GM12878 (cell line): ENCODE measurements at regions of chr13 and their contacts with region 1.

Region 1: GRCh38 chr13:38872693-38873092 is 117.9 kb downstream of the STOML3 start:
- DNase-seq: no peak
- ATAC-seq: peak; percentile 87
- H3K4me3 ChIP-seq: no peak overlapping the region
- H3K27ac ChIP-seq: no peak overlapping the region
- H3K4me1 ChIP-seq: no peaks in the 10 kb centered on the region
- H3K27me3 ChIP-seq: 0 out of 4 replicates have a peak, but pooled peaks cover 0 to 3% of the 10 kb centered on the region in 2 experiments
- CTCF ChIP-seq: peak; percentile 61 to 73 (median 65)
- EP300 ChIP-seq: no peak
- POLR2A ChIP-seq: no peak
- RAD21 ChIP-seq: peak; percentile 82

Region 2: DNA sequence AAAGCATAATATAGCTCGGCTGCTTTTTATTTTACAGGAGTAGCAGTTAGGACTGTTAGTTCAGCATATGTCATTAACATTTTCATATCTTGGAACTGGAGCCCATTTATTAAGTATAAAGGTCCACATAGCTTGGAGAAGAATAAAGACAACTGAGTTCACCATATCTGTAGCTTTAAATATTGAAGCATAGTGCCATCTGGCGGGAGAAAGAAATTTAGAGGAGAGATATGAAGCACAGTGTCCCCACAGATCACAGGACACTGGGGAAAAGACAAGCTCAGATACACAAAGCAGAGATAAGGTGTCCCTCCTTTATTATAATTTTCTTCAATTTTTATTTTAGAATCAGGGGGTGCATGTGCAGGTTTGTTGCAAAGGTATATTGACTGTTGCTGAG is 290.6 kb before region 1 on chr13:
- CTCF ChIA-PET with region 1: interaction called, 3 read pairs
- POLR2A ChIA-PET with region 1: no interaction called
- RAD21 ChIA-PET with region 1: interaction called, 3 read pairs
- SMC1A ChIA-PET with region 1: interaction called, 9 read pairs
- in situ Hi-C with region 1: no loop called
- intact Hi-C with region 1: loop called (anchors 5 kb)
- DNase-seq: no peak
- ATAC-seq: peak; percentile 85
- H3K4me3 ChIP-seq: no peak overlapping the region
- H3K27ac ChIP-seq: no peak overlapping the region
- H3K4me1 ChIP-seq: no peaks in the 10 kb centered on the region
- H3K27me3 ChIP-seq: no peaks in the 10 kb centered on the region
- CTCF ChIP-seq: peak; percentile 17 to 53 (median 29); a peak in 4 of 6 replicates
- EP300 ChIP-seq: no peak
- POLR2A ChIP-seq: no peak
- RAD21 ChIP-seq: peak; percentile 66

Region 3: DNA sequence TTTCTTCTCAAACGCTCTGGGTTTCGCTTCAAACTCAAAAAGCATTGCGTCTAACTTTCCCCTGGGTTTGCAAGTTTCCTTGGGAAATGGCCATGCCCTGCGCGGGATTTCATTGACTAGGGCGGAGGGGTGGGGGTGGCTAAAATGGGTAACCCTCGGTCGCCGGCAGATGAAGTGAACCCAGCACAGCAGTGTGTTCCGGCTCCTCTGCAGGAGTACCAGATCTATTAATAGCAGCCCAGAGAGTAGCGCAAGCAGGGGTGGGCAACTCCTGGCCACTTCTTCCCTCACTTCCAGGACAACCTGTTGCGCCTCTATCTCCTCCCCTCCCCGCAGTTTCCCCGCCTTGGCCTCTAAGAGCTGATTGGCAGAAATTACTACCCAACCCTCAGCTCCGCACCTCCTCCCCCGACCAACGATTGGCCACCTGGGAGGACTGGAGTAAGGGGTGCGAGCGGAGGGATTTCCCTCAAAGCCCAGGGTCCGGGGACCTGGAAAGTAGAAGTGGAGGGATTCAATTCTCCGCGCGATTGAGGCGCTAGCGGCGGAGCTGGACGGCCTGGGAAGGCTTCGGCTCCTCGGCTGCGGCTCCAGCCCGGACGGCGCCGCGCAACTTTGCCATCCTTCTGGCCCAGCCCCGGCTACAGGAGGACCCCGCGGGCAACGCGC is 186.0 kb before region 1 on chr13 and contains the start of gene FREM2:
- CTCF ChIA-PET with region 1: interaction called, 58 read pairs
- POLR2A ChIA-PET with region 1: interaction called, 3 read pairs
- RAD21 ChIA-PET with region 1: interaction called, 26 read pairs
- SMC1A ChIA-PET with region 1: interaction called, 68 read pairs
- in situ Hi-C with region 1: loop called (anchors 5 kb)
- intact Hi-C with region 1: loop called (anchors 1 kb)
- DNase-seq: no peak
- ATAC-seq: peak; percentile 72
- H3K4me3 ChIP-seq: no peak within 1 kb of the TSS
- H3K27ac ChIP-seq: no peak within 1 kb of the TSS
- H3K4me1 ChIP-seq: no peaks in the 10 kb centered on the region
- H3K27me3 ChIP-seq: peaks cover 0 to 9% of the 10 kb centered on the region in 2 experiments
- CTCF ChIP-seq: no peak
- EP300 ChIP-seq: no peak
- POLR2A ChIP-seq: no peak
- RAD21 ChIP-seq: no peak
- polyA plus RNA-seq, gene FREM2: 0.02 to 0.03 TPM

Region 4: GRCh38 chr13:38718374-38718773 is 154.3 kb before region 1 on chr13:
- CTCF ChIA-PET with region 1: no interaction called
- POLR2A ChIA-PET with region 1: no interaction called
- RAD21 ChIA-PET with region 1: no interaction called
- SMC1A ChIA-PET with region 1: no interaction called
- in situ Hi-C with region 1: no loop called
- intact Hi-C with region 1: no loop called
- DNase-seq: no peak
- ATAC-seq: no peak
- H3K4me3 ChIP-seq: no peak overlapping the region
- H3K27ac ChIP-seq: no peak overlapping the region
- H3K4me1 ChIP-seq: no peaks in the 10 kb centered on the region
- H3K27me3 ChIP-seq: no peaks in the 10 kb centered on the region
- CTCF ChIP-seq: no peak
- EP300 ChIP-seq: no peak
- POLR2A ChIP-seq: no peak
- RAD21 ChIP-seq: no peak

Region 5: GRCh38 chr13:38763439-38764381 is 109.0 kb before region 1 on chr13:
- CTCF ChIA-PET with region 1: interaction called, 25 read pairs
- POLR2A ChIA-PET with region 1: no interaction called
- RAD21 ChIA-PET with region 1: interaction called, 9 read pairs
- SMC1A ChIA-PET with region 1: interaction called, 23 read pairs
- in situ Hi-C with region 1: no loop called
- intact Hi-C with region 1: loop called (anchors 5 kb)
- DNase-seq: no peak
- ATAC-seq: peak; percentile 75
- H3K4me3 ChIP-seq: no peak overlapping the region
- H3K27ac ChIP-seq: no peak overlapping the region
- H3K4me1 ChIP-seq: no peaks in the 10 kb centered on the region
- H3K27me3 ChIP-seq: no peaks in the 10 kb centered on the region
- CTCF ChIP-seq: peak; percentile 38 to 50 (median 45); a peak in 5 of 6 replicates
- EP300 ChIP-seq: no peak
- POLR2A ChIP-seq: no peak
- RAD21 ChIP-seq: peak; percentile 53

Region 6: DNA sequence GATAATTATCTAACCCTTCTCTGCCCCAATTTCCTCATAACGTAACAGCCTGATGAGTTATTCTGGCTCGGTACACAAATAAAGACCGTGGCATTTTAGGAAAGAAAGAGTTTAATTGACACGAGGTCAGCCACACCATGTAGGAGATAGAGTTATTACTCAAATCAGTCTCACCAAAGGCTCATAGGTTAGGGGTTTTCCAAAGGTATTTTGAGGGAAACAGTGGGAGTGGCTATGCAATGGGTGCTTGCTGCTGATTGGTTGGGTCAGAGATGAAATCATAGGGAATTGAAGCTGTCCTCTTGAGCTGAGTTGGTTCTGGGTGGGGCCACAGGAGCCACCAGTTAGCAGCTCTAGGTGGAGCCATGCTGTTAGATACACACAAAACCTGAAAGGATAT is 48.4 kb before region 1 on chr13:
- CTCF ChIA-PET with region 1: interaction called, 27 read pairs
- POLR2A ChIA-PET with region 1: interaction called, 7 read pairs
- RAD21 ChIA-PET with region 1: interaction called, 30 read pairs
- SMC1A ChIA-PET with region 1: interaction called, 26 read pairs
- in situ Hi-C with region 1: no loop called
- intact Hi-C with region 1: no loop called
- DNase-seq: peak; percentile 36
- ATAC-seq: peak; percentile 91
- H3K4me3 ChIP-seq: no peak overlapping the region
- H3K27ac ChIP-seq: no peak overlapping the region
- H3K4me1 ChIP-seq: no peaks in the 10 kb centered on the region
- H3K27me3 ChIP-seq: no peaks in the 10 kb centered on the region
- CTCF ChIP-seq: no peak; a peak in 1 of 6 replicates
- EP300 ChIP-seq: no peak
- POLR2A ChIP-seq: no peak
- RAD21 ChIP-seq: peak; percentile 26; the same call in 1 of the 2 replicates

Region 7: GRCh38 chr13:38883783-38884182 is 11.1 kb after region 1 on chr13:
- CTCF ChIA-PET with region 1: interaction called, 39 read pairs
- POLR2A ChIA-PET with region 1: no interaction called
- RAD21 ChIA-PET with region 1: interaction called, 4 read pairs
- SMC1A ChIA-PET with region 1: interaction called, 26 read pairs
- in situ Hi-C with region 1: no loop called
- intact Hi-C with region 1: no loop called
- DNase-seq: no peak
- ATAC-seq: no peak
- H3K4me3 ChIP-seq: no peak overlapping the region
- H3K27ac ChIP-seq: no peak overlapping the region
- H3K4me1 ChIP-seq: no peaks in the 10 kb centered on the region
- H3K27me3 ChIP-seq: no peaks in the 10 kb centered on the region; a peak in 2 of 4 replicates
- CTCF ChIP-seq: no peak
- EP300 ChIP-seq: no peak
- POLR2A ChIP-seq: no peak
- RAD21 ChIP-seq: no peak